HCT116 (cell line): ENCODE measurements at regions of chr1 and their contacts with region 1.

Region 1: GRCh38 chr1:44799770-44800584 is at the start of gene PLK3:
- DNase-seq: peak; percentile 96
- ATAC-seq: peak; percentile 86
- H3K4me3 ChIP-seq: peak within 1 kb of the TSS; percentile 87 to 91
- H3K27ac ChIP-seq: peak within 1 kb of the TSS; percentile 84
- H3K4me1 ChIP-seq: peaks cover 19 to 71% of the 10 kb centered on the region in 2 experiments
- H3K27me3 ChIP-seq: no peaks in the 10 kb centered on the region
- CTCF ChIP-seq: peak in 2 of 3 experiments; percentile 81 to 91; a peak in 4 of 6 replicates
- POLR2A ChIP-seq: peak; percentile 97
- RAD21 ChIP-seq: no peak
- total RNA-seq, gene PLK3: 56.1 TPM

Region 2: DNA sequence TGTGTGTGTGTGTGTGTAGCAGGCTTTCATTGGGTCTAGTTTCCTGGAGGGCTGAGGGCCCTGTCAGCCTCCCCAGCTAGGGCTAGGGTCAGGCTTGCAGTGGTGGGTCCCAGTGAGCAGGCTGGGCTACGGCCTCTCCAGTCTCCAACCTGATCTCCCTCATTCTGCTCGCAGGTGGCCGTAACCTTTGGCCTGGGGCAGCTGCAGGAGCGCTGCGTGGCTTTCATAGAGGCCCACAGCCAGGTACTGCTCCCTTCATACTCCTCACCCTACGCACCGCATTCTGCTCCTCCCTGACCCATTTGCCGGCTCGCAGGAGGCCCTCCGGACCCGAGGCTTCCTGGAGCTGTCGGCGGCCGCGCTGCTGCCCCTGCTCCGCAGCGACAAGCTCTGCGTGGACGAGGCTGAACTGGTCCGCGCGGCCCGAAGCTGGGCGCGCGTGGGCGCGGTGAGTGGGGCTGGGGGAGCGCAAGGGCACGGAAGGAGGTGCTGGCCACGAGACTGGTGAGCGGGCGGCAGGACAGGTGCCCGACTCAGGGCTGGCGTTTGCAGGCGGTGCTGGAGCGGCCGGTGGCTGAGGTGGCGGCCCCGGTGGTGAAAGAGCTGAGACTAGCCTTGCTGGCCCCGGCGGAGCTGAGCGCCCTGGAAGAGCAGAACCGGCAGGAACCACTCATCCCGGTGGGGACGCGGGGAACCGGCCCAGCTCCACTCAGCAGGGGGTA is 13.0 kb after region 1 on chr1:
- CTCF ChIA-PET with region 1: interaction called, 10 read pairs
- POLR2A ChIA-PET with region 1: interaction called, 200 read pairs
- RAD21 ChIA-PET with region 1: interaction called, 3 read pairs
- intact Hi-C with region 1: no loop called
- DNase-seq: no peak
- ATAC-seq: no peak
- H3K4me3 ChIP-seq: no peak overlapping the region
- H3K27ac ChIP-seq: no peak overlapping the region
- H3K4me1 ChIP-seq: peaks cover 39 to 56% of the 10 kb centered on the region in 2 experiments
- H3K27me3 ChIP-seq: no peaks in the 10 kb centered on the region
- CTCF ChIP-seq: no peak
- POLR2A ChIP-seq: no peak
- RAD21 ChIP-seq: no peak